ENCODE measurements at regions of chr20 and their contacts with region 1.

Region 1: DNA sequence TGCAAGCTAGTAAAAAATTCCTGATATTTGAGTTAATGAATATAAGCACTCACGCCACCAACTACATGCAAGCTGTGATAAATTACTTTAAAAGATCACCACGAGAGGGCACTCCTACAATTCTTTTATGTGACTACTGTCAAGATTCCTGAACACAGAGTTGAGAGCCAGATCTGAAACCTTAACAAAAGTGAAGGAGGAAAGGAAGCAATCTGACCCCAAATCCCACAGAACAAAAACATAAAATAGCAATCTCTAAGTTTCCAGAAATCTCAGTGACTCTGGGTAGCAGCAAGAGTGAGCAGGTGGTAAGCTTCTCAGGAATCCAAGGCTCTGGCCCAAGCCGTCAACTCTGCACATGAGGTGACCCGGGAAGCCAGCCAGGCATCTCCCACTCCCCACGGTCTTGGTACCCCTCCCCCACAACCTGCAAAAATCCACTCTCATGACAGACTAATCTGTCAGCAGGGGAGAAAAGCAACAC is 55.1 kb downstream of the STAU1 start:
- DNase-seq: no peak
- H3K4me3 Mint-ChIP-seq: no peak overlapping the region
- H3K27ac Mint-ChIP-seq: no peak overlapping the region
- H3K4me1 Mint-ChIP-seq: no peaks in the 10 kb centered on the region
- H3K27me3 Mint-ChIP-seq: no peaks in the 10 kb centered on the region

Region 2: GRCh38 chr20:49046087-49046900 is 86.7 kb before region 1 on chr20 and contains the start of gene CSE1L:
- CTCF ChIA-PET with region 1: no interaction called
- POLR2A ChIA-PET with region 1: no interaction called
- intact Hi-C with region 1: no loop called
- DNase-seq: peak; percentile 96
- H3K4me3 Mint-ChIP-seq: peak within 1 kb of the TSS; percentile 99
- H3K27ac Mint-ChIP-seq: peak within 1 kb of the TSS; percentile 99
- H3K4me1 Mint-ChIP-seq: peaks cover 33% of the 10 kb centered on the region
- H3K27me3 Mint-ChIP-seq: no peaks in the 10 kb centered on the region
- total RNA-seq, gene CSE1L: 107 to 109 TPM

Region 3: DNA sequence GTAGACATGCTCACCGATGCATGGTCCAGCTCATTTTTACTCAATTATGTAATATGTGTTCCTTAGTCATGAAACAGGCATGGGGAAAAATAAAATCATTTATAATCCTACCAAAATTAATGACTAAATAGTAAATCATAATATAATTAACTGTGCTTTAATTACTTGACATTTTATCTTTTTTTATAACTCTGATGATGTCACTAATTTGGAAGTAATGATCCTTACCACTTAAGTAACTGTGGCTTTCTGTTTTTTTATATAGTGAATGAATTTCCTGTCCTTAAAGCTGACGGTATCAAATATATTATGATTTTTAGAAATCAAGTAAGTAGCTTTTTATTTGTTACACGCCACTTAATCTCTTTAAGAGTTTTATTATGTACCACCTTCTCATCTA is 54.7 kb before region 1 on chr20:
- CTCF ChIA-PET with region 1: no interaction called
- POLR2A ChIA-PET with region 1: no interaction called
- intact Hi-C with region 1: no loop called
- DNase-seq: no peak
- H3K4me3 Mint-ChIP-seq: no peak overlapping the region
- H3K27ac Mint-ChIP-seq: no peak overlapping the region
- H3K4me1 Mint-ChIP-seq: peaks cover 8% of the 10 kb centered on the region
- H3K27me3 Mint-ChIP-seq: no peaks in the 10 kb centered on the region

Region 4: DNA sequence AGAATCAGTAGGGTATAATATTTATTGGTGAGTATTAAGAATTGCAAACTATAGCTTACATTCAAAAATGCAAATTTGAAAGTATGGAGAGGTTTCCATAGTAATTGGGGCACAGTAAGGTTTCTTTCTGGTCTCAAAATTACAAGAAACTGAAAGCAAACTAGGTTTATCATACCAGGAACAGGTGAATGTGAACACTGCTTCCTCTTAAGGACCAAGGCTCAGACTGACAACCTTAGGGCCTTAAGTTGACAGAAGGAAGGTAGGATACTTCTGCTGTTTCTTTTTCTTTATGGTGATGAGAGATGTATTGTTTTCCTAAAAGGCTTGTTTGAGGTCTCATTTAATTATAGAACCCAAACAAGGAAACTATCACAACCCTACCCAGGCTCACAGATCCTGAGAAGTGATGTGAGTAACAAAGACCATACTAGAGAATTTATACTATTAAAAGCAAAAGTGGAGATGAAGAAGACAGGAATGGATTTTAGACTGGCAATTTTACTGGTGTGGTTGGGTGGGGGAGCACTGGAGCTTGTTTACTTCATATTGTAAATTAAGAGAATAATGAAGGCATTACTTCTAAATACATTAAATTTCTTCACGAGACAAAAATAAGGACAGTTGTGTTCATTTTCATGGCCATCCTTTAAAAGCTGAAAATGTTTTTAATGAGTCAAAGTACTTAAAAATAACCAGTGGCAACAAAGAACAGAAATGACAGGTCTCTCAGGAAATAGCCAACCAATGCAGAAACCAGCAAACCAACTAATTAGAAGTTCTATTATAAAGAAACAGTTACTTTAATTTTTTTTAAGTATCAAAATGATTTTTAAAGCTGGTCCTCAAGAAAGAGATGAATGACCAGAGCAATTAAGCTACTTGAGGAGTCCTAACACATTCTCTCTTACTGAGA is 33.8 kb after region 1 on chr20:
- CTCF ChIA-PET with region 1: interaction called, 5 read pairs
- POLR2A ChIA-PET with region 1: no interaction called
- intact Hi-C with region 1: loop called (anchors 2 kb)
- DNase-seq: no peak
- H3K4me3 Mint-ChIP-seq: peak overlapping the region; percentile 41
- H3K27ac Mint-ChIP-seq: peak overlapping the region; percentile 84
- H3K4me1 Mint-ChIP-seq: peaks cover 61% of the 10 kb centered on the region
- H3K27me3 Mint-ChIP-seq: no peaks in the 10 kb centered on the region

Region 5: DNA sequence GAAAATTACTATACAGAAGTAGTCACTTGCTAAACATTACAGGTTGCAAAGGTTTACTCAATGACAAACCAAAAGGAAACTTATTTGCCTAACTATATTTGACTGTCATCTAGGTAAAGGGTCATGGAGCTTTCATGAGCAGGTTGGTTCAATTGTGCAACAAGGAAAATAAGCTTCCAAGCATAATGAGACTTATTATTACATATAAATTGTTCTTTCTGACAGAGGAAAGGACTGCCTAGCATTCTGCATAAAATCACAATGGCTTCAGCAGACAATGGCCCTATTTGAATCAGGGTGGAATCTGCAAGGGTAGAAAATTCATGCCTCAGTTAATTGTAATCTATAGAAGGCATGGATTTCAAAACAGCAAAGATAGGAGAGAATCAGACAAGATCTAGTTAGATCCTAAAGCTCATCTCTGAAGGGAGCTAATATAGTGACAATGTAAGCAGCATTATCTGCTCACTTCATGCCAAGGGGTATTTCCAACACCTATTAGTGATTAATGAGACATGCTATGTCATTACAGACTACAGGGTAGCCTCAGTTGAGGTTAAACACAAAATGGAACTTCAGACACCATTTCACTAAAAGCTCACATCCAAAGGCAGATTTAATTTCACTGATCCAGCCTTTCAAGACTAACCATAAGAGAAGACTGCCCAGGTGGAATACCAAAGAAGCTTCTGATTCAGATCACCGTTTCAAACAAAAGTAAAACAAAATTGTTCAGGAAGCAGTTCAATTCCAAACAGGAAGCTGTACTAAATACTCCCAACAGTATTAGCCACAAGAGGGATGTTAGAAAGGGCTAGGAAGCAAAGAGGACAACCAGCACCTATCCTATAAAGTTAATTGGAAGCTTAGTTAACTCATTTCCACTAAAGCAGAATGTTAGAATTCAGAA is 46.6 kb after region 1 on chr20:
- CTCF ChIA-PET with region 1: interaction called, 22 read pairs
- POLR2A ChIA-PET with region 1: no interaction called
- intact Hi-C with region 1: no loop called
- DNase-seq: no peak
- H3K4me3 Mint-ChIP-seq: no peak overlapping the region
- H3K27ac Mint-ChIP-seq: no peak overlapping the region
- H3K4me1 Mint-ChIP-seq: peaks cover 56% of the 10 kb centered on the region
- H3K27me3 Mint-ChIP-seq: no peaks in the 10 kb centered on the region

Region 6: GRCh38 chr20:49186535-49187329 is 53.7 kb after region 1 on chr20:
- CTCF ChIA-PET with region 1: interaction called, 22 read pairs
- POLR2A ChIA-PET with region 1: no interaction called
- intact Hi-C with region 1: no loop called
- DNase-seq: peak; percentile 79
- H3K4me3 Mint-ChIP-seq: peak overlapping the region; percentile 87
- H3K27ac Mint-ChIP-seq: peak overlapping the region; percentile 89
- H3K4me1 Mint-ChIP-seq: peaks cover 48% of the 10 kb centered on the region
- H3K27me3 Mint-ChIP-seq: no peaks in the 10 kb centered on the region

Region 7: DNA sequence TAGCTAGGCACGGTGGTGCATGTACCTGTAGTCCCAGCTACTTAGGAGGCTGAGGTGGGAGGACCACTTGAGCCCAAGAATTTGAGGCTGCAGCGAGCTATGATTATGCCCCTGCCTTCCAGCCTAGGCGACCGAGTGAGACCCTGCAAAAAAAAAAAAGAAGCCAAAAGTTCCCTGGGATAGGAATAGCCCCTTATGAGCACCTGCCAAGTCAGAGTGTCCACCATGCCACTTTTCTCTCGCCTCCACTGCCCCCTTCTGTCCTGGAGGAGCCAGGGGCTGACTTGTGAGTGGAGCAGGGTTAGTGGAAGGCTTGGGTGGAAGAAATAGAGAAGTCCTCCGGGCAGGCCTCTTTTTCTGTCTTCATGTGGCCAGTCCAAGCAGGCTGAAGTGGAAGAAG is 74.0 kb after region 1 on chr20:
- CTCF ChIA-PET with region 1: interaction called, 24 read pairs
- POLR2A ChIA-PET with region 1: interaction called, 5 read pairs
- intact Hi-C with region 1: loop called (anchors 2 kb)
- DNase-seq: peak; percentile 46
- H3K4me3 Mint-ChIP-seq: no peak overlapping the region
- H3K27ac Mint-ChIP-seq: no peak overlapping the region
- H3K4me1 Mint-ChIP-seq: no peaks in the 10 kb centered on the region
- H3K27me3 Mint-ChIP-seq: no peaks in the 10 kb centered on the region